ENCODE measurements at regions of chr22 and their contacts with region 1.

Region 1: DNA sequence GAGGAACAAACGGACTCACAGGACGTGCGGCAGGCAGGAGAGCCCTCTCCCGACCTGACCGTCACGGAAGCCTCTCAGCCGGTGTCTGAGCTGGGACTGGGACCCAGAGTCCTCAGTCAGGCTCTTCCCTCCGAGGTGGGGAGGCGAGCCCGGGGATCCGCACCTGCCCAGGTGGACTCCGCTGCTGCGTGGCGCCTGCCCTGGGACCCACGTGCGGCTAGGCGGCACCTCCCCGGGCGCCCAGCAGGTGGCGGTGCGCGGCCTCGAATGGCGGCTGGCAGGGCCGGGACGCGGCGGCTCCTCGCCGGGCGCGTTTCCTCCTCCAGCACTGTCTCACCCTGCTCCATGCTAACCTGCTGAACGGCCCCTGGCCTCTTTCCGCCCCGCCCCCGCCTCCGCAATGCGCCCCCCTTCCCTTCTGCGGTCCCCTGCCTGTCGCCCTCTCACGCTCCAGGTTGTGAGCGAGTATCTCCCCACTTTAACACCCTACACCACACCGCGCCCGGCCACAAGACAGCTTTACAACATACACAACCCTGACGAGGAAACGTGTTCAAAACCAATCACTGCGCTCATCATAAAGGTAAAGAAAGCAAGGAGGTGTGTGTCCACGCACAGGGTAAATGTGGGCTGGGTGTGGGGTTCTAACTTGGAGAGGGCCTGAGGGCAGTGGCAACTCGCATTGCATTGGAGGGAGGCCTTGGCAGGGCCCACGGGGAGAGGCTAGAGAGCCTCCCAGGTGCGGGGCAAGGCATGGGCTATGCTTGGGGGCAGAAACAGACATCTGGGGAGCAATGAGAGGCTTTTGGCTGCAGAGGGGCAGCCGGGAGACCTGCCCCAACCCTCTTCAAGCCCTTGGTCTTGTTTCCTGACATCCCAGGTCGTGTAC is 25.9 kb upstream of the ATXN10 start:
- DNase-seq: peak; percentile 66 to 90 (median 78)
- ATAC-seq: peak; percentile 96
- H3K4me3 ChIP-seq: no peak overlapping the region
- H3K4me3 Mint-ChIP-seq: peak overlapping the region; percentile 61
- H3K27ac ChIP-seq: no peak overlapping the region
- H3K27ac Mint-ChIP-seq: no peak overlapping the region
- H3K4me1 ChIP-seq: peaks cover 4% of the 10 kb centered on the region
- H3K4me1 Mint-ChIP-seq: peaks cover 9% of the 10 kb centered on the region
- H3K27me3 ChIP-seq: peaks cover 0 to 3% of the 10 kb centered on the region in 2 experiments
- H3K27me3 Mint-ChIP-seq: peaks cover 39% of the 10 kb centered on the region
- CTCF ChIP-seq: peak; percentile 94

Region 2: DNA sequence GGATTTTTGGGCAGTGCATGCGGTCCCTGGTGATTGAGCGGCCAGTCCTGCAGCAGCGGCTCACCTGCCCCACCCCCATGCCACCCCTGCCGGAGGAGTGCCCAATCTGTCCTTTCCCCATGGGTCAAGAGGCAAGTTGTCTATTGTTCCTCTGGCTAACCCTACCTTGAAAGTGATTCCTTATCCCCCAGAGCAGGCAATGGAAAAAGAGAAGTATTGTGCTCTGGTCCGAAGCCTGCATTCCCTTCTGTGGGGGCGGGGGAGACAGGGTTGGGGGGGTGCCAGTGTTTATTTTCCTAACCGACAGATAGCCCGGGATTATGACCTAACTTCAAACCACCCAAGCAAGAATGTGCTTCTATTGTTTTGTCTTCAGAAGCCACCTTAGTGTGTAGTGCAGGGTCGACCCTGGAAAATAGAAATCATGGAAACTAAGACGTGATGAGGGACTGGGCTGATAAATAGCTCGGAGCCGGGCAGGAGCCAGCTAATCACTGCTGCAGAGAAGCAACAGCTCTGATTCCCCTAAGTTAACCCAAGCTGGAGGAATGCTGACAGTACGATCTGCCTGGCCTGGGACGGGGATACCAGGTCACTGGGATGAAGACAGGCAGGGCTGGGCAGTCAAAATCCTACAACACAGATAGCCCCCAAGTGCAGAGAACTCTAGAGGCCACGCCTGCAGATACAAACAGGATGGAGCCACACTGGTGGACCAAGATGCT is 12.8 kb before region 1 on chr22:
- CTCF ChIA-PET with region 1: interaction called, 14 read pairs
- POLR2A ChIA-PET with region 1: no interaction called
- intact Hi-C with region 1: no loop called
- DNase-seq: no peak
- ATAC-seq: no peak
- H3K4me3 ChIP-seq: no peak overlapping the region
- H3K4me3 Mint-ChIP-seq: no peak overlapping the region
- H3K27ac ChIP-seq: no peak overlapping the region
- H3K27ac Mint-ChIP-seq: no peak overlapping the region
- H3K4me1 ChIP-seq: no peaks in the 10 kb centered on the region
- H3K4me1 Mint-ChIP-seq: no peaks in the 10 kb centered on the region
- H3K27me3 ChIP-seq: peaks cover 0 to 2% of the 10 kb centered on the region in 2 experiments
- H3K27me3 Mint-ChIP-seq: peaks cover 42% of the 10 kb centered on the region
- CTCF ChIP-seq: no peak

Region 3: GRCh38 chr22:45831394-45831793 is 185.6 kb after region 1 on chr22:
- CTCF ChIA-PET with region 1: interaction called, 3 read pairs
- POLR2A ChIA-PET with region 1: no interaction called
- intact Hi-C with region 1: loop called in 1 of 2 experiments (anchors 10 kb)
- DNase-seq: no peak
- ATAC-seq: no peak
- H3K4me3 ChIP-seq: no peak overlapping the region
- H3K4me3 Mint-ChIP-seq: no peak overlapping the region
- H3K27ac ChIP-seq: no peak overlapping the region
- H3K27ac Mint-ChIP-seq: no peak overlapping the region
- H3K4me1 ChIP-seq: no peaks in the 10 kb centered on the region
- H3K4me1 Mint-ChIP-seq: no peaks in the 10 kb centered on the region
- H3K27me3 ChIP-seq: no peaks in the 10 kb centered on the region
- H3K27me3 Mint-ChIP-seq: no peaks in the 10 kb centered on the region
- CTCF ChIP-seq: no peak

Region 4: GRCh38 chr22:45863981-45864751 is 218.4 kb after region 1 on chr22:
- CTCF ChIA-PET with region 1: interaction called, 7 read pairs
- POLR2A ChIA-PET with region 1: no interaction called
- intact Hi-C with region 1: loop called (anchors 2 kb)
- DNase-seq: peak; percentile 42 to 79 (median 65)
- ATAC-seq: peak; percentile 73
- H3K4me3 ChIP-seq: no peak overlapping the region
- H3K4me3 Mint-ChIP-seq: no peak overlapping the region
- H3K27ac ChIP-seq: no peak overlapping the region
- H3K27ac Mint-ChIP-seq: no peak overlapping the region
- H3K4me1 ChIP-seq: no peaks in the 10 kb centered on the region
- H3K4me1 Mint-ChIP-seq: peaks cover 8% of the 10 kb centered on the region
- H3K27me3 ChIP-seq: peaks cover 2 to 3% of the 10 kb centered on the region in 2 experiments
- H3K27me3 Mint-ChIP-seq: peaks cover 29% of the 10 kb centered on the region
- CTCF ChIP-seq: peak; percentile 89

Region 5: DNA sequence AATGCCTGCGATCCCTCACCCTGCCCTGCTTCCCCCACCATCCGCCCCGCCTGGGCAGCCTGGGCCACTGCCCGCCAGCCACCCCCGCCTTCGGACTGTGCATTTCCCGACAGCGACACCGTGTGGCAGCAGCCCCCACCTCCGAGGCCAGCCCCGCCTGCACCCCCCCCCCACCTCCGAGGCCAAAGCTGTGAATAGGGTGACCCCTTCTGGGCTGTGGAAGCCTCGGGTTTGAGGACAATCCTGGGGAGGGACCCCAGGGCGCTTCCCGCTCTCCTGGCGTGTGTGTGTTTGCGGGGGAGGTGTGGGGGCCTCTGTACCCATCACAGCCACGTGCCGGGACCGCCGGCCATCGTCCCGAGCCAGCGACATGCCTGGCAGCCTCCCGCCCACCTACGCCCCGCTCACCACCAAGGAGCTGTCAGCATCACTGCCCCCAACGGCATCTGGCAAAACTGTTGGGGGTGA is 470.8 kb after region 1 on chr22:
- CTCF ChIA-PET with region 1: interaction called, 6 read pairs
- POLR2A ChIA-PET with region 1: no interaction called
- intact Hi-C with region 1: loop called (anchors 1 to 5 kb)
- DNase-seq: peak; percentile 70 to 90 (median 88)
- ATAC-seq: peak; percentile 97
- H3K4me3 ChIP-seq: no peak overlapping the region
- H3K4me3 Mint-ChIP-seq: no peak overlapping the region
- H3K27ac ChIP-seq: no peak overlapping the region
- H3K27ac Mint-ChIP-seq: no peak overlapping the region
- H3K4me1 ChIP-seq: peaks cover 5% of the 10 kb centered on the region
- H3K4me1 Mint-ChIP-seq: no peaks in the 10 kb centered on the region
- H3K27me3 ChIP-seq: no peaks in the 10 kb centered on the region
- H3K27me3 Mint-ChIP-seq: no peaks in the 10 kb centered on the region
- CTCF ChIP-seq: peak; percentile 70